Activated naive CD4-positive, alpha-beta T cell treated with anti-CD3 and anti-CD28 coated beads for 36 hours (primary cell): ENCODE measurements at regions of chr5 and their contacts with region 1.

Region 1: GRCh38 chr5:35926389-35927051 is 11.9 kb downstream of the CAPSL start:
- DNase-seq: peak; percentile 83
- H3K4me3 Mint-ChIP-seq: peak overlapping the region; percentile 16
- H3K27ac Mint-ChIP-seq: no peak overlapping the region
- H3K4me1 Mint-ChIP-seq: peaks cover 46% of the 10 kb centered on the region
- H3K27me3 Mint-ChIP-seq: peaks cover 1% of the 10 kb centered on the region

Region 2: DNA sequence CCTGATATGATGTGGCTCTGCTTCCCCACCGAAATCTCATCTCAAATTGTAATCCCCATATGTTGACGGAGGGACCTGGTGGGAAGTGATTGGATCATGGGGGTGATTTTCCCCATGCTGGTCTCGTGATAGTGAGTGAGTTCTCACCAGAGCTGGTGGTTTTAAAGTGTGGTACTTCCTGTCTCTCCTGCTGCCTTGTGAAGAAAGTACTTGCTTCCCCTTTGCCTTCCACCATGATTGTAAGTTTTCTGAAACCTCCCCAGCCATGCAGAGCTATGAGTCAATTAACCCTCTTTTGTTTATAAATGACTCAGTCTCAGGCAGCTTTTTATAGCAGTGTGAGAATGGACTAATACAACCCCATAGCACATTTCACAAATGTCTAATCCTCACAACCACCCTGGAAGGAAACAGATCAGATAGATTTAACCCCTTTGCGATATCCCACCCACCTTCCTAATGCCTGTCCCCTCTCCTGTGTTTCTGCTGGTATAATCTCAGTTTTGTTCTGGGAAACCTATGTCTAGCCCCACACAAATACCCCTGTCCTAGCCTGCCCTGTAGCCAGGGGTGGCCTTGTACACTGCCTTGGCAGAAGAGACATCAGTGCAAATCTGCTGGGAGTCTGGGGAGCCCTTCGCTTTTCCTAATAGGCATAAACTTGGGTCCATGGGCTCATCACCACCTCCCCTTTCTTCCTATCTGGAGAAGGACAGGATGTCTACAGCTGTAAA is 1427.4 kb before region 1 on chr5:
- CTCF ChIA-PET with region 1: no interaction called
- intact Hi-C with region 1: loop called (anchors 5 kb)
- DNase-seq: peak; percentile 63
- H3K4me3 Mint-ChIP-seq: no peak overlapping the region
- H3K27ac Mint-ChIP-seq: peak overlapping the region; percentile 74
- H3K4me1 Mint-ChIP-seq: peaks cover 13% of the 10 kb centered on the region
- H3K27me3 Mint-ChIP-seq: peaks cover 18% of the 10 kb centered on the region

Region 3: DNA sequence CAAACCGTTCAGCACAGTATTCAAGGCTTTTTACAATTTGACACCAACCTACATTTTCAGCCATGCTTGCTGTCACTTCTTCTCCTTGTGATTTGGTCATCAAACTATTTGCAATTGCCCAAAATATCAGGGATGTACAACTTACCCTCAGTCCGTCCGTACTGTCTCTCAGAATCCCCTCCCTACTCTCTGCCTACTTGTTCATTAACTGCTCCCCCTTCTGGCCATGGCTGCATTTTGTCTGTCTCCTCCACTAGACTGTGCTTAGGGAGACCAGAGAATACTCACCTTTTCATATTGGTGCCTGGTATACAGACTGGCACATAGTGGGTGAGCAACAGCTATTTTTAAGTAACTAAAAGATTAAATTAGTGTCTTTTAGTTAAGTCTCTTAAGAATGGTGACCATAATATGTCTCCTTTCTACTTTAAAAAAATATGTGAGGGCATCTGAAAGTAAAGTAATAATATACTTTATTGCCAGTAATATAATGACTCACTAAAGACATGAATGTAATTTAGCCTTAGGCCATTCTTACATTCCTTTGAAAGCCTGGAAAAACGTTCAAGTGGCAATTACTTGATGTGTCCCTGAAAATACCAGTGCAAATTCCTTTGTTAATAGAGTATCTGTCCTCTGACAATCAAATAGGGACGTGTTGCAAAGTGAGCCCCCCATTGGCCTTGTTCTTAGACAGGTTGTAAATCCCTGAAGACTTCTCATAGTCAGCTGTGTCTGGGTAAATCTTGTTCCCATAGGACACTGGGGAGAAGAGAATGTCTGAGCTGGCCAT is 724.0 kb before region 1 on chr5:
- CTCF ChIA-PET with region 1: no interaction called
- intact Hi-C with region 1: loop called (anchors 5 kb)
- DNase-seq: peak; percentile 67
- H3K4me3 Mint-ChIP-seq: no peak overlapping the region
- H3K27ac Mint-ChIP-seq: no peak overlapping the region
- H3K4me1 Mint-ChIP-seq: no peaks in the 10 kb centered on the region
- H3K27me3 Mint-ChIP-seq: peaks cover 25% of the 10 kb centered on the region

Region 4: DNA sequence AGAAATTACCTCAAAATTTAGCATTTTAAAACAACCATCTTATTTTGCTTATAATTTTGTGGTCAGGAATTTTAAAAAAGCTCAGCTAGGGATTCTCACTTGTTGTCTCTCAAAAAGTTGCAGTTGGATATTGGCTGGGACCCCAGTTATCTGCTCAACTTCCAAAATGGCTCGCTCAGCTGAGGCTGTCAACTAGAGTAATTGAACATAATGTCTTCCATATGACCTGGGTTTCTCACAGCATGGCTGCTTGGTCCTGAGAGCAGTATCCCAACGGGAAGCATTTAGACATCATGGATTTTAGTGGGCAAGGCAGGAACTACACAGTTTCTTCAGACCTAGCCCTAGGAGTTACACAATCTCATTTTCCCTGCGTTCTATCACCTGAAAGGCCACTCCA is 372.5 kb before region 1 on chr5:
- CTCF ChIA-PET with region 1: interaction called, 3 read pairs
- intact Hi-C with region 1: loop called (anchors 2 kb)
- DNase-seq: no peak
- H3K4me3 Mint-ChIP-seq: no peak overlapping the region
- H3K27ac Mint-ChIP-seq: no peak overlapping the region
- H3K4me1 Mint-ChIP-seq: no peaks in the 10 kb centered on the region
- H3K27me3 Mint-ChIP-seq: no peaks in the 10 kb centered on the region

Region 5: DNA sequence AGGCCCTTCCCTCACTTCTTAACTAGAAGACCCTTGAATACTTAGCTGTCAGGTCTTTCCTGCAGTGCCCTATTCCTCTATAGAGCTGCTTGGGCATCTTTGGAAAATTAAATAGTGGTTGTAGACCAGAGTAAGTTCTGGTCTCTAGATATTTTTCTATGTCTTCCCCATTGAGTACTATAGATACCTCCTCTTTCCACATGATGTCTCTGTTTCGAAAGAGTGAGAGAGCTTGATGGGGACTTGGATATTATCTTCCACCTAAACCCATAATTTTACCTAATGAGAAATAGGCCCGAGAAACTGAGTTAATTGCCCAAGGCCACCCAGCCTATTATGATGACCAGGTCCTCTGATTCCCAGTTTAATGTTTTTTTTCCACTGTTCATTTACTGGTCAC is 268.6 kb before region 1 on chr5:
- CTCF ChIA-PET with region 1: interaction called, 146 read pairs
- intact Hi-C with region 1: loop called (anchors 2 kb)
- DNase-seq: no peak
- H3K4me3 Mint-ChIP-seq: no peak overlapping the region
- H3K27ac Mint-ChIP-seq: peak overlapping the region; percentile 21
- H3K4me1 Mint-ChIP-seq: peaks cover 21% of the 10 kb centered on the region
- H3K27me3 Mint-ChIP-seq: no peaks in the 10 kb centered on the region

Region 6: DNA sequence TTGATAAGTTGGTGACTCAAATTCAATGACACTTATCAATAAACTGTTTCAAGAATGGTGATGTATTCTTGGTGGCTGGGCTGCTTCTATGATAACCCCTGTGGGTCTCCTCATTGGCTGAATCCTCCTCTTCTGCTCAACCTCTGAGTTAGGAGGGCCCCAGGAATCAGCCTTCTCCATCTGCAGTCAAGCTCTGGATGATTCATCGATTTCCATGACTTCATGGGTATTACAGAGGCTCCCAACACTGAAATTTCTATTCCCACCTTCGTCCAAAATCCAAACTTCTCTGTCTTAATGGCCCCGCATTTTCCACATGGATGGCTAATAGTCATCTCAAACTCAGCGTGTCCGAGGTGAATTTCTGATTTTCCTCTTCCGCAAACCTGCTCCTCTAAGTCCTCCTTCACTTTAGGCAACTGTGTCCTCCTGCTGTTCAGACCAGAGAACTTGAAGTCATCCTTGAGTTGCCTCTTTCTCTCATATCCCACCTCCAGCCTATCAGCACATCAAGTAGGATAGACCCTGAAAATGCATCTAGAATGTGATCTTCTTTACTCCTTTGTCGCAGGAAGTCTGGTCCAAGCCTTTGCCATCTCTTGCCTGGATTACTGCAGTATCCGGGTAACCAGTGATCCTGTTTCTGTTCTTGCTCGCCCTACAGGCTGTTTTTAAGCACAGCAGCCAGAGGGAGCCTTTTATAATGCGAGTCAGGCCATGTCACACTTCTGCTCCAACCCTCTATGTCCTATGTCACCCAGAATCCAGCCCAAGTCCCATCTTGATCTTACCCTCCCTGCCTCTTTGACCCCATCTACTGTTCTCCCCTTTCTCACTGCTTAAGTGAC is 111.2 kb before region 1 on chr5:
- CTCF ChIA-PET with region 1: interaction called, 6 read pairs
- intact Hi-C with region 1: loop called (anchors 1 kb)
- DNase-seq: peak; percentile 76
- H3K4me3 Mint-ChIP-seq: no peak overlapping the region
- H3K27ac Mint-ChIP-seq: no peak overlapping the region
- H3K4me1 Mint-ChIP-seq: peaks cover 45% of the 10 kb centered on the region
- H3K27me3 Mint-ChIP-seq: no peaks in the 10 kb centered on the region

Region 7: GRCh38 chr5:35876921-35877320 is 49.6 kb before region 1 on chr5:
- CTCF ChIA-PET with region 1: interaction called, 8 read pairs
- intact Hi-C with region 1: loop called (anchors 1 kb)
- DNase-seq: peak; percentile 43
- H3K4me3 Mint-ChIP-seq: no peak overlapping the region
- H3K27ac Mint-ChIP-seq: peak overlapping the region; percentile 88
- H3K4me1 Mint-ChIP-seq: peaks cover 85% of the 10 kb centered on the region
- H3K27me3 Mint-ChIP-seq: no peaks in the 10 kb centered on the region